ENCODE measurements at regions of chrX and their contacts with region 1.

Region 1: DNA sequence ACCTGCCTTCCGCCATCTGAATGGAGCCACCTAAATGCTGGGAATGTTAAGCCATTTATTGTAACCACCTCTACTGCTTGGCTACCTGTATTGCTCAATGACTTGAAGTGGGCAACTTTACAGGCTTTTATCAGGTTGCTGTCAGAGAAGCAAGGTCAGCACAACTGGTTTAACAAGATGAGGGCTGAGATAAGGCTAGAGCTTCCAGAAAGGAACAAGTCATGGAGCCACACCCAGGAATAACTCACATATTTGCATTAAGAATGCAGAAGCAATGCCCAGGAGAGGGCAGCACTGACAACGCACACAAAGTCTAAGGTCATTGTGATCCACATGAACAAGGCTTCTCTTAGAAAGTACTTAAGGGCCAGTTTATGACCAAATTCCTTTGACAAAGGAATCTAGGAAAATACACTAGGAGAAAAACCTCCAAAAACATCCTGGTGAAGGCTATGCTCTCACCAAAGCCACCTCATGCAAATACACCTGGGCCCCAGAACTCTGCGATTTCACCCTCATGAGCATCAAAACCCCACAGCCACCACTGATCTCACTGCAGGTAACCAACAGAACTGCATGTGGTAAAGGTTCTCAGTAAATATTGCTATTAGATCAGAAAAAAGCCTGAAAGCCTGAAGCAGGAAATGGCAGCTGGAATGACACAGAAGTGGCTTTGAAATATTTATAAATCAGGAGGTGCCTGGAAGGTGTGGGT is 15.0 kb upstream of the STS start:
- DNase-seq: no peak
- ATAC-seq: peak; percentile 25
- H3K4me3 Mint-ChIP-seq: no peak overlapping the region
- H3K27ac Mint-ChIP-seq: no peak overlapping the region
- H3K4me1 Mint-ChIP-seq: peaks cover 26% of the 10 kb centered on the region
- H3K27me3 Mint-ChIP-seq: no peaks in the 10 kb centered on the region
- CTCF ChIP-seq: no peak

Region 2: DNA sequence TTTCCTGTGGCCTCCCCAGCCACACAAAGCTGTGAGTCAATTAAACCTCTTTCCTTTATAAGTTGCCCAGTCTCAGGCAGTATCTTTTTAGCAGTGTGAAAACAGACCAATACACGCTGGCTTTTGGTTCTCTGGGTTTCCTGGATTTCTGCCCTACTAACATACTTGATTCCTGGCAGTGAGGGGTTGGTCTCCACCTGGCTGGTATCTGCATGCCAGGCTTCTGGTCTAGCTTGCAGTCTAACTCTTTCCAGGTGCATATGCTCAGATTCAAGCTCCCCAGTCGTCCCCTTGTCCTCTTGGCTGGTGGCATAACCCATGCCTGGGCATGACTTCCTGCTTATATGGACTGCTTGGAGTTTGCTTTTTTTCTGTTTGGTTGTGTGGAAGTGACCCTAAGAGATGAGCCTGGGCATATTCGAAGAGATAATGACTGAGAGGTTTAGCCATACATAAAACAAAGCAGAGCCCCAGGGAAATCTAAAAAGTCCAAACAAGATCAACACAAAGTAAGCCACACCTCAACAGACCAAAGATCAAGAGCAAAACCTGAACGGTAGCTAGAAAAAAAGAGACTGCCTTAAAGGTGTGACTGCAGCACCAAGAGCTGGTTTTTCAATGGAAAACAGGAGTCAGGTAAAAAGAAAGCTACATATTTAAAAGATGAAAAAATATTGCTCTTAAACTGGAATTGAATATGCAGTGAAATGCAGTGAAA is 87.1 kb before region 1 on chrX:
- CTCF ChIA-PET with region 1: no interaction called
- POLR2A ChIA-PET with region 1: no interaction called
- intact Hi-C with region 1: no loop called
- DNase-seq: no peak
- ATAC-seq: no peak
- H3K4me3 Mint-ChIP-seq: no peak overlapping the region
- H3K27ac Mint-ChIP-seq: no peak overlapping the region
- H3K4me1 Mint-ChIP-seq: peaks cover 13% of the 10 kb centered on the region
- H3K27me3 Mint-ChIP-seq: no peaks in the 10 kb centered on the region
- CTCF ChIP-seq: no peak

Region 3: DNA sequence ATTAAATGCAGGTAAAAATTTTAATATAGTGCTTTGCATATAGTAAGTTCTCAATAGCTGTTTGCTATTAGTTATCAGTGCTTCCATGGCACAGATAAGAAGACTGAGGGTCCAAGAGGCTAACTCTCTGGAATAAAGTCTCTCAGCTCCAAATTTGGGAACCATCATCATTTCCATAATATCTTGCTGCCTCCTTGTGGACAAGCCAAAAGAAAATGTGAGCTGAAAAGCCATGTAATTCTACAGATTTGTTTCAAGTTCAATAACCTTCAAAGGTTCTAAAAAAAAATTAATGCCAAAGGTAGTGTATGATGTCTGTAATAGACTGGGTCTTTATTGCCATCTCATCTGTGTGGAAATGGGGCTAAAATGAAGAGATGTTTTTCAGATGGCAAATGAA is 573.5 kb after region 1 on chrX:
- CTCF ChIA-PET with region 1: no interaction called
- POLR2A ChIA-PET with region 1: no interaction called
- intact Hi-C with region 1: loop called (anchors 10 kb)
- DNase-seq: no peak
- ATAC-seq: no peak
- H3K4me3 Mint-ChIP-seq: no peak overlapping the region
- H3K27ac Mint-ChIP-seq: no peak overlapping the region
- H3K4me1 Mint-ChIP-seq: no peaks in the 10 kb centered on the region
- H3K27me3 Mint-ChIP-seq: no peaks in the 10 kb centered on the region
- CTCF ChIP-seq: no peak

Region 4: GRCh38 chrX:7908821-7909220 is 776.3 kb after region 1 on chrX:
- CTCF ChIA-PET with region 1: no interaction called
- POLR2A ChIA-PET with region 1: no interaction called
- intact Hi-C with region 1: no loop called
- DNase-seq: no peak
- ATAC-seq: no peak
- H3K4me3 Mint-ChIP-seq: no peak overlapping the region
- H3K27ac Mint-ChIP-seq: no peak overlapping the region
- H3K4me1 Mint-ChIP-seq: no peaks in the 10 kb centered on the region
- H3K27me3 Mint-ChIP-seq: no peaks in the 10 kb centered on the region
- CTCF ChIP-seq: no peak

Region 5: GRCh38 chrX:8067754-8068462 is 935.4 kb after region 1 on chrX:
- CTCF ChIA-PET with region 1: no interaction called
- POLR2A ChIA-PET with region 1: no interaction called
- intact Hi-C with region 1: no loop called
- DNase-seq: no peak
- ATAC-seq: no peak
- H3K4me3 Mint-ChIP-seq: no peak overlapping the region
- H3K27ac Mint-ChIP-seq: no peak overlapping the region
- H3K4me1 Mint-ChIP-seq: no peaks in the 10 kb centered on the region
- H3K27me3 Mint-ChIP-seq: no peaks in the 10 kb centered on the region
- CTCF ChIP-seq: no peak